ENCODE measurements at regions of chr13 and their contacts with region 1.

Region 1: DNA sequence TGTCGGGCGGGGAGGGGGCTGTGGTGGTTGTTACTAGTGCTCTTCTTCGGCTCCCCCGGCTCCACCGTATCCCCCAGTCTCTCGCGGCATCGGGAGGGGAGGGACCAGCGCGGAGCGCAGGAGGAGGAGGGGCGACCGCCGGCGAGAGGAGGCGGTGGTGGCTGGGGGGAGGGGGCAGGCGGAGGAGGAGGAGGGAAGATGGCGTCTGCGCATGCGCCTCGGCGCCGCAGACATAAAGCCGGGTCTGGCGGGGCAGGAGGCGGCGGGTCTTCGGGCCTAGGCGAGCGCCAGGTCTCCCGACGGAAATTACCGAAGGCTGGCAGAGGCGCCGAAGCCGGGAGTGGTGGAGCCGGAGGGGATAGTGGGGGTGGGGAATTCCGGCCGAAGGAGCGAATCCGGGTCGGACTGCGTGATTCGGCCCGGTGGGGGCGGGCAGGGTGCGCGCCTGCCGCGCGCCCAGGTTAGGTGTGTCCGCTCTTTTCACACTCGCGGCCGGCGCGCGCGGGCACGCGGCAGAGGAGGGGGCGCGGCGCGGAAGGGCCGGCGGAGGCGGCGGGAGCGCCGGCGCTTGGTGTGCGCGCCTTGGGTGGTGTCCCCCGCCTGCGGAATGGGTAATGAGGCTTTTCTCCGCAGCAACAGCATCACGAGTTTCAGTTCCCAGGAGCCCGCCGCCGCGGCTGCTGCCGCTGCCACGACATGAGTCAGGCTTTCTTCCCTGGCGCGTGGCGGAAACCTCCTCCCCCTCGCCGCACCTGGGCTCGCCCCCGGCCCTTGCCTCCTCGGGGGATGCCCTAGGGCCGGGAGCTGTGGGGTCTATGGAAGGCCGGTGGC is 1.3 kb upstream of the TSC22D1 start:
- DNase-seq: peak; percentile 97 to 99 (median 98)
- H3K4me3 ChIP-seq: peak overlapping the region; percentile 80
- H3K27ac ChIP-seq: peak overlapping the region; percentile 91 to 96
- H3K4me1 ChIP-seq: peaks cover 14% of the 10 kb centered on the region
- H3K27me3 ChIP-seq: no peaks in the 10 kb centered on the region
- CTCF ChIP-seq: no peak
- EP300 ChIP-seq: peak; percentile 31
- POLR2A ChIP-seq: peak; percentile 61

Region 2: GRCh38 chr13:44484562-44485138 is 92.8 kb before region 1 on chr13:
- intact Hi-C with region 1: loop called in 1 of 4 experiments (anchors 10 kb)
- DNase-seq: no peak
- H3K4me3 ChIP-seq: no peak overlapping the region
- H3K27ac ChIP-seq: no peak overlapping the region
- H3K4me1 ChIP-seq: no peaks in the 10 kb centered on the region
- H3K27me3 ChIP-seq: no peaks in the 10 kb centered on the region
- CTCF ChIP-seq: no peak
- EP300 ChIP-seq: no peak
- POLR2A ChIP-seq: no peak

Region 3: GRCh38 chr13:44917589-44918325 is 340.3 kb after region 1 on chr13:
- intact Hi-C with region 1: loop called in 2 of 4 experiments (anchors 5 to 10 kb)
- DNase-seq: peak; percentile 97 to 99 (median 98)
- H3K4me3 ChIP-seq: peak overlapping the region; percentile 51
- H3K27ac ChIP-seq: peak overlapping the region; percentile 91 to 95
- H3K4me1 ChIP-seq: peaks cover 8% of the 10 kb centered on the region
- H3K27me3 ChIP-seq: no peaks in the 10 kb centered on the region
- CTCF ChIP-seq: peak; percentile 61 to 93 (median 84)
- EP300 ChIP-seq: no peak
- POLR2A ChIP-seq: peak; percentile 67